ENCODE measurements at regions of chr17 and their contacts with region 1.

Region 1: GRCh38 chr17:43940630-43941029 is 1.6 kb downstream of the PPY start:
- DNase-seq: peak in 1 of 2 experiments; percentile 83
- H3K4me3 ChIP-seq: no peak overlapping the region
- H3K27ac ChIP-seq: no peak overlapping the region
- H3K4me1 ChIP-seq: peaks cover 0 to 10% (median 5%) of the 10 kb centered on the region in 4 experiments; a peak in 6 of 7 replicates
- H3K27me3 ChIP-seq: peaks cover 1 to 29% (median 21%) of the 10 kb centered on the region in 4 experiments
- CTCF ChIP-seq: peak; percentile 72 to 83 (median 75)
- EP300 ChIP-seq: no peak
- POLR2A ChIP-seq: no peak
- RAD21 ChIP-seq: peak; percentile 59 to 74

Region 2: DNA sequence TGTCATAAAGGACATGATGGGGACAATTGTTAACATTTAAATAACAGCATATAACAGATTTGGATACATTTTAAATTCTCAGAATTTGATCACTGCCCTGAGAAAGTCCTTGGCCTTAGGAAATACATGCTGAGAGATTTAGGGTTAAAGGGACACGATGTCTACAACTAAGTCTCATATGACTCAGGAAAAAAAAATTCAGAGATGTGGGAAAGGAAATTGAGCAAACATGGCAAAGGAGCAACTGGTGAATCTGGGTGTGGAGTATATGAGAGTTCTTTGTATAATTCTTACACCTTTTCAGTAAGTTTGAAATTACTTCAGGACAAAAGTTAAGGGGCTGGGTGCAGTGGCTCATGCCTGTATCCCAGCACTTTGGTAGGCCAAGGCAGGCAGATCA is 125.9 kb before region 1 on chr17:
- CTCF ChIA-PET with region 1: no interaction called
- POLR2A ChIA-PET with region 1: no interaction called
- DNase-seq: no peak
- H3K4me3 ChIP-seq: no peak overlapping the region
- H3K27ac ChIP-seq: no peak overlapping the region
- H3K4me1 ChIP-seq: peaks cover 0 to 4% (median 1%) of the 10 kb centered on the region in 4 experiments; a peak in 1 of 7 replicates
- H3K27me3 ChIP-seq: no peaks in the 10 kb centered on the region
- CTCF ChIP-seq: no peak
- EP300 ChIP-seq: no peak
- POLR2A ChIP-seq: no peak
- RAD21 ChIP-seq: no peak

Region 3: DNA sequence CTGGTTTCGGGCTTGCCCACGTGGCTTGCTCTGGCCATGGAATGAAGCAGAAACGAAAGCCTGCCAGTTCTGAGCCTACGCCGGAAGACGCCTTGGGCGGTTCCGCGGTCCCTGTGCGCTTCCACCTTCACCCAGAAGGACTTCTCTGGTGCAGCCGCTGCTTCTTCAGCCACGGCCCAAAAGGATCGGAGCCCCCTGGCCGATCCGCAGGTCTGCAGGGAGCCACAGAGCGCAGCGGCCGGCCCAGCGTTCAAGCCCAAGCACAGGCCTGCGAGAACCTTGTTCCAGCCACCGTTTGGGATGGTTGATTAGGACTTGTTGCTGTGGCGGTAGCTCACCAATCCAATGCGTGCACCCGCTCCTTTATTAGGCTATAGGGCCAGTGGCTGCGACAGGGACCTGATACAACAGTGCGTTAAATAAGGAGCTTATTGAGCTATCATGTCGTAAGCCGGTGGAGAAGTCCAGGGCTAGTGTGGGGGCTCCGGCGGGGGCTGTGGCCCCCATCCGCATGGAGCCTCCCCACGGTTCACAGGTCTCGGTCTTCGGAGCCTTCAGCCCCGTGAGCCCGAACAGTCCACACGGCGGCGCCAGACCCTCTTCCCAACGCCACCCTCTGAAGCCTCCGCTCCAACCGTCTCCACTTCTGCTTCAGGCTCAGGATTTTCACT is 23.1 kb before region 1 on chr17:
- CTCF ChIA-PET with region 1: interaction called, 106 read pairs
- POLR2A ChIA-PET with region 1: no interaction called
- DNase-seq: peak in 1 of 2 experiments; percentile 84
- H3K4me3 ChIP-seq: peak overlapping the region; percentile 16 to 52 (median 26); a peak in 5 of 8 replicates
- H3K27ac ChIP-seq: no peak overlapping the region
- H3K4me1 ChIP-seq: peaks cover 0 to 8% (median 6%) of the 10 kb centered on the region in 4 experiments; a peak in 5 of 7 replicates
- H3K27me3 ChIP-seq: peaks cover 0 to 9% (median 7%) of the 10 kb centered on the region in 4 experiments; a peak in 5 of 7 replicates
- CTCF ChIP-seq: peak; percentile 74 to 81 (median 79)
- EP300 ChIP-seq: no peak
- POLR2A ChIP-seq: no peak; a peak in 1 of 3 replicates
- RAD21 ChIP-seq: peak; percentile 57 to 68

Region 4: GRCh38 chr17:43952717-43953666 is 12.4 kb after region 1 on chr17:
- CTCF ChIA-PET with region 1: interaction called, 14 read pairs
- POLR2A ChIA-PET with region 1: interaction called, 10 read pairs
- DNase-seq: peak; percentile 66 to 93
- H3K4me3 ChIP-seq: peak overlapping the region; percentile 61 to 73 (median 70)
- H3K27ac ChIP-seq: peak overlapping the region; percentile 80
- H3K4me1 ChIP-seq: peaks cover 5 to 15% (median 12%) of the 10 kb centered on the region in 4 experiments
- H3K27me3 ChIP-seq: peaks cover 2 to 25% (median 18%) of the 10 kb centered on the region in 4 experiments; a peak in 6 of 7 replicates
- CTCF ChIP-seq: no peak
- EP300 ChIP-seq: no peak
- POLR2A ChIP-seq: peak in 1 of 2 experiments; percentile 75; a peak in 2 of 3 replicates
- RAD21 ChIP-seq: no peak

Region 5: DNA sequence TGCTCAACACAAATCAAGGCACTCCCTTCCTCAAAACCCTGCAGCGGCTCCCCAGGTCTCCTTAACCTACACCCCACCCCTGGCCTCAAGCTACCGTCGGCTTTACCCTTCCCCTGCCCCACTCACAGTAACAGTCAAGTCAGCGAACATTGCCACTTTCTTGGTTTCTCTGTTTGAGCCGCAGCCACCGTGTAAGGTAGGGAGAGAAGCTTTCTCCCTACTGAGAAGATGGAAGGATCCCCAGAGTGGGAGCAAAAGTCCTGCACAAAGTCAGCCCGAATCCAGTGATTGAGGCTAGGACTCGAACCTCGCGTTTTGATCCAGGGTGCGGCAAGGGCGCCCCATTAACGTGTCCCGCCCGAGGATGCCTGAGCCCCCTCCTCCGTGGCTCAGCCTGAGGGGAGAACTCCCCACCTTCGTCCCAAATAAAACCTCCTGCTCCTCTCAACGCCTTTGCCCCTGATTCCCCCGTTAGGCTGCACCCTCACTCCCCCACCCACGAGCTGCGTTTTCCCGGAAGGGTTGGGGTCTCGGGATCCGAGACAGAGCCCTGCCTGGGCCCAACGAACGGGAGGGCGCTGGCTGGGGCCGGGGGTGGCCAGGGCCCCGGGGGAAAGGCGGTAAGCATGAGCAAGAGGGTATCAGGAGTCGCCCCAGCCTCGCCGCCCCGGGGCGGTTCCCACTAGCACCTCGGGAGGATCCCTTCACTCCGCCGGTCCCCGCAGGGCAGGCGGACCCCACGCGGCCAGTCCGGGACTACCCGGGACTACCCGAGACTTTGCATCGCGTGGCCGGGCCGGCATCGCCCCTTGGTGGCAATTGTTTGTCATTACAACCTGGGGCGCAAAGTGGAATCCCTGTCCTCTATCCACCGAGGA is 53.9 kb after region 1 on chr17:
- CTCF ChIA-PET with region 1: interaction called, 416 read pairs
- POLR2A ChIA-PET with region 1: interaction called, 5 read pairs
- DNase-seq: peak in 1 of 2 experiments; percentile 92
- H3K4me3 ChIP-seq: peak overlapping the region; percentile 12 to 67 (median 42)
- H3K27ac ChIP-seq: no peak overlapping the region
- H3K4me1 ChIP-seq: peaks cover 0 to 2% (median 0%) of the 10 kb centered on the region in 4 experiments; a peak in 1 of 7 replicates
- H3K27me3 ChIP-seq: peaks cover 0 to 9% (median 4%) of the 10 kb centered on the region in 4 experiments; a peak in 5 of 7 replicates
- CTCF ChIP-seq: peak; percentile 81 to 97 (median 83)
- EP300 ChIP-seq: no peak
- POLR2A ChIP-seq: no peak
- RAD21 ChIP-seq: peak; percentile 91 to 94

Region 6: DNA sequence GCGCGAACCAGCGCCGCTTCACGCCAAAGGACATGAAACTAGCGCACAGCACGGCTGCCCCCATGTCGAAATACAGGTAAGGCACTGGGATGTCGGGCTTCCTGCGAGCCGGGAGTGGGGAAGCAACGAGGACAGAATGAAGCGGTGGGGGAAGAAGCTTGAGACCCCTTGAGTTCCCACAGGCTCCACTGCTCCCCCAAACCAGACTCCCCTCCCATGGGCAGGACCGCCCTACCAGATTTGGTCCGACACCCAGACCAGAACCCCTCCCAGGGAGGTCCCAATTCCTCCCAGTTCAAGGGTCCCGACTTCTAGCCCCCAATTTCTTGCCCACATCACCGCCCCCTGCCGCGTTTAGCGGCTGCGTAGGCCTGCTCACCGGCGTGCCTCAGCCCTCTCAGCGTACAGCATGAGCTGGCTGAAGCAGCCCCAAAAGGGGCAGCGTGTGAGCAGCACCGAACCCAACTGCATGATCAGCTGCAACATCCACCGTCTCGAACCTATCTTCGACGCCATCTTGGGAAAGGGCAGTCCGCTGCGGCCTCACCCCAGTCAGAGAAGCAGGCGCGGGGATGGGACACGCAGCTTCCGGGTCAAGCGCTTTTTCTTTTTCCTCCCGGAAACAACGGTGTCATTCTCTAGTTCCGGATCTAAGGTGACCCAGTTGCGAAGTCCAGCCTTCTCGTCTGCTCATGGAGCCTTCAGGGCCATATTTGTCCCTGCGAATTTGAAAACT is 74.0 kb after region 1 on chr17 and contains the start of gene TMEM101:
- CTCF ChIA-PET with region 1: interaction called, 32 read pairs
- POLR2A ChIA-PET with region 1: interaction called, 4 read pairs
- DNase-seq: peak; percentile 82 to 86
- H3K4me3 ChIP-seq: peak within 1 kb of the TSS; percentile 84 to 91 (median 88)
- H3K27ac ChIP-seq: peak within 1 kb of the TSS; percentile 90
- H3K4me1 ChIP-seq: peaks cover 0 to 2% (median 0%) of the 10 kb centered on the region in 4 experiments; a peak in 3 of 7 replicates
- H3K27me3 ChIP-seq: no peaks in the 10 kb centered on the region
- CTCF ChIP-seq: no peak
- EP300 ChIP-seq: peak in 1 of 2 experiments; percentile 65; a peak in 1 of 3 replicates
- POLR2A ChIP-seq: peak in 1 of 2 experiments; percentile 86; a peak in 2 of 3 replicates
- RAD21 ChIP-seq: peak in 1 of 2 experiments; percentile 20; a peak in 1 of 4 replicates
- total RNA-seq, gene TMEM101: 16.1 and 20.9 TPM in 2 replicates

Region 7: DNA sequence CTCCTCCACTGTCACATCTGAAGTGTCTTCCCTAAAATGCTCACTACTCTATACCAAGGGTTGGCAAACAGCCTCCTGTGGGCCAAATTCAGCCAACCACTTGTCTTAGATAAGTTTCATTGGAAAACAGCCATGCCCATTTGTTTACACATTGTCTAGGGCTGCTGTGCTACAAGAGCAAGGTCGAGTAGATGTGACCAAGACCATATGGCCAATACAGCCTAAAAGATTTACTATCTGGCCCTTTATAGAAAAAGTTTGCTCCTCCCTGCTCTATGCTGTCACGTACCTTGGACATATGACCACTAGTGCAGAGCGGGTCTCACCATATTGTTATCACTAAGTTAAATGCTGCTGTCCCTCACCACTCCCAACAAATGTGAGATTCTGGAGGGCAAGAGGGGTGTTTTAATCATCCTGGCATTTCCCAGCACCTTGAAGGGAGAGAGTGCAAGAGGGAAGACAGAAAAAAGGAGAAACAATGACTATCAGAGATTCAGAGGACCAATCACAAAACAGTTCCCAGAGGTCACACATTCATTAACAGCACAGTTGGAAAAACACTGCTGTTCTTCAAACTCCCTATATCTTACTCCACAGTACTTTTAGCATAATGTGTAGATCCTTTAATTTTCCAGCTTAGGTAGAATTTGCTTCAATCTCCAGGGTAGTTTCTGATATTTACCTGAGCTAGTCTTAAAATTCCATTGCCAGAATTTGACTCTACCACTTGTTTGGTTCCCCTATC is 112.7 kb after region 1 on chr17:
- CTCF ChIA-PET with region 1: no interaction called
- POLR2A ChIA-PET with region 1: no interaction called
- DNase-seq: no peak
- H3K4me3 ChIP-seq: no peak overlapping the region
- H3K27ac ChIP-seq: no peak overlapping the region
- H3K4me1 ChIP-seq: no peaks in the 10 kb centered on the region
- H3K27me3 ChIP-seq: no peaks in the 10 kb centered on the region
- CTCF ChIP-seq: no peak
- EP300 ChIP-seq: no peak
- POLR2A ChIP-seq: no peak
- RAD21 ChIP-seq: no peak

Measured in H1 (cell line).